Activated CD4-positive, alpha-beta memory T cell treated with anti-CD3 and anti-CD28 coated beads, Interleukin-2, amount 10 ng/mL, durations not matched to agents 7 days and 5 days (primary cell): ENCODE measurements at regions of chr5 and their contacts with region 1.

Region 1: DNA sequence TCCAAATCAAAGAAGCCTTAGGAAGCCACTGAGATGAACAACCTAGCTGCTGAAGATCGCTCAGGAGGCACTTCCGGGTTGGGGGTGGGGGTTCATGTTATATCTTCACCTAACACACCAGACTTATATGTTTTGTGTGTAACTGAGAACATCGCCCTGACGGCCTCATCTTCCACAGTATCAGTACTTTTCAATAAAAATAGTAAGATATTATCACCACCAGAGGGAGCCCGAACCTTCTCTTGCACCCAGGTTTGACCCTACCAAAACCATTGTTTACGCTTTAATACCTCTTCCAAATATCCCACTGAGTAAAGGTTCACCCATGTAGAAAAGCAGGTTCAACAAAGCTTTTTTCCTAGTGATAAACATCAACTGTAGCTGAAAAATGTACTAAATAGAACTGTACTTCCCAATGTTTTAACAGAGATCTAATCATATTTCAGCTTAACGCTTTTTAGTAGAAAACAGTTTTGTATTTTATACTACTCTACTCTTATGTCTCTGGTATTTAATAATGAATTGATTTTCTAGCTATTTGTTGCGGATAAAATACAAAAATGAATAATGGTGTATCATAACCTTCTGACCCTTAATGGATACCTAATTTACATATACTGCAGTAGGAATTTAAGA is 244.0 kb downstream of the EPB41L4A start:
- DNase-seq: peak; percentile 33
- H3K4me3 Mint-ChIP-seq: no peak overlapping the region
- H3K27ac Mint-ChIP-seq: no peak overlapping the region
- H3K4me1 Mint-ChIP-seq: peaks cover 4% of the 10 kb centered on the region
- H3K27me3 Mint-ChIP-seq: peaks cover 11% of the 10 kb centered on the region

Region 2: GRCh38 chr5:112419986-112420864 is 245.1 kb after region 1 on chr5:
- CTCF ChIA-PET with region 1: interaction called, 55 read pairs
- POLR2A ChIA-PET with region 1: interaction called, 3 read pairs
- DNase-seq: peak; percentile 56
- H3K4me3 Mint-ChIP-seq: peak overlapping the region; percentile 72
- H3K27ac Mint-ChIP-seq: no peak overlapping the region
- H3K4me1 Mint-ChIP-seq: peaks cover 11% of the 10 kb centered on the region
- H3K27me3 Mint-ChIP-seq: peaks cover 54% of the 10 kb centered on the region